ENCODE measurements at regions of chr2 and their contacts with region 1.

Region 1: GRCh38 chr2:171522052-171522787 is at the start of gene CYBRD1:
- DNase-seq: peak; percentile 71
- H3K4me3 ChIP-seq: peak within 1 kb of the TSS; percentile 76 to 96 (median 89)
- H3K27ac ChIP-seq: peak within 1 kb of the TSS; percentile 52
- H3K4me1 ChIP-seq: peaks cover 13% of the 10 kb centered on the region
- H3K27me3 ChIP-seq: no peaks in the 10 kb centered on the region
- CTCF ChIP-seq: no peak
- POLR2A ChIP-seq: peak; percentile 59
- total RNA-seq, gene CYBRD1: 22.8 and 24.8 TPM in 2 replicates

Region 2: DNA sequence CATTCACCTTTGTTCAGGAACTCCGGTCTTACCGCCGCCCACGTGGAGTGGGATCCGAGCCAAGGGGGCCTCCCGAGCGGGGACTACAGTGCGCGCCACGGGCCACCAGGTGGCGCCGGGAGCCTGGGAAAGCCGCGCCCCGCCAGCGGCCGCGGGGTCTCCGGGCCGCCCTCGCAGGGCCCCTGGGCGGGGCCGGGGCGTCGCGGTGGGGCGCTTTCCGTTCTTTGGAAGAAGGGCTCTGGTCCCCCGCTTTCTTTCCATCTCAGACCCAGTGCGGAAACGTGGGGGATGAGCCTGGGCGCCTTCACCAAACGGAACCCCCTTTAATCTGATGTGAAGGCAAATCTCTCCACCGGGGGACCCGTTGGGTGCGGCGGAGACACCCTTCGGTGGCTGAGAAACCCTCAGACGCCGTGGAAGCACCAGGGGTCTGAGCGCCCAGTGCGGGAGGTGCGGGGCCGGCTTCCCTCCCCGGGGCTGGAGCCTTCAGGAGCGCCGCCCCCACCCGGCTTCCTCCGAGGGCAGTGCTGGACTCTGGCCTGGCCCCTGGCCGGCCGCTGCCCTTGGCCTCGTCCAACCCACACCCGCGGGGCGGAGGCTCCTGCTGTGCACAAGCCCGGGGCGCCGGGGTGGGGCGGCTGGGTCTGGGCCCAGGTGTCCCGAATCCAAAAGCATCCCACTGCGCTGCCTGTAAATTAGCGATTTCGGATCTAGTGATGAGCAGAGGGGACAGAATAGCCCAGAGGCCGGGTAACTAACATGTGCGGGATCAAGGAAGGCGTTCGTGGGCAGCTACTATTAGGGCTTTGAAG is 548.5 kb before region 1 on chr2:
- CTCF ChIA-PET with region 1: no interaction called
- POLR2A ChIA-PET with region 1: no interaction called
- dilution Hi-C with region 1: no loop called
- intact Hi-C with region 1: loop called (anchors 1 kb)
- DNase-seq: peak; percentile 85
- H3K4me3 ChIP-seq: peak overlapping the region; percentile 54 to 74 (median 69)
- H3K27ac ChIP-seq: peak overlapping the region; percentile 79
- H3K4me1 ChIP-seq: peaks cover 8% of the 10 kb centered on the region
- H3K27me3 ChIP-seq: no peaks in the 10 kb centered on the region
- CTCF ChIP-seq: peak; percentile 83 to 98
- POLR2A ChIP-seq: peak; percentile 67

Region 3: GRCh38 chr2:171185941-171186340 is 336.3 kb before region 1 on chr2:
- CTCF ChIA-PET with region 1: no interaction called
- POLR2A ChIA-PET with region 1: no interaction called
- dilution Hi-C with region 1: no loop called
- intact Hi-C with region 1: no loop called
- DNase-seq: no peak
- H3K4me3 ChIP-seq: no peak overlapping the region
- H3K27ac ChIP-seq: no peak overlapping the region
- H3K4me1 ChIP-seq: no peaks in the 10 kb centered on the region
- H3K27me3 ChIP-seq: no peaks in the 10 kb centered on the region
- CTCF ChIP-seq: no peak
- POLR2A ChIP-seq: no peak

Region 4: GRCh38 chr2:171433763-171434670 is 88.2 kb before region 1 on chr2 and contains the starts of genes DCAF17 and METTL8:
- CTCF ChIA-PET with region 1: no interaction called
- POLR2A ChIA-PET with region 1: no interaction called
- dilution Hi-C with region 1: no loop called
- intact Hi-C with region 1: loop called (anchors 1 kb)
- DNase-seq: peak; percentile 97
- H3K4me3 ChIP-seq: peak within 1 kb of the TSS; percentile 76 to 87 (median 85)
- H3K27ac ChIP-seq: peak within 1 kb of the TSS; percentile 95
- H3K4me1 ChIP-seq: peaks cover 14% of the 10 kb centered on the region
- H3K27me3 ChIP-seq: no peaks in the 10 kb centered on the region
- CTCF ChIP-seq: peak; percentile 7 to 35
- POLR2A ChIP-seq: peak; percentile 84
- total RNA-seq, gene DCAF17: 14.9 and 15.0 TPM in 2 replicates
- total RNA-seq, gene METTL8: 20.2 and 25.0 TPM in 2 replicates

Region 5: DNA sequence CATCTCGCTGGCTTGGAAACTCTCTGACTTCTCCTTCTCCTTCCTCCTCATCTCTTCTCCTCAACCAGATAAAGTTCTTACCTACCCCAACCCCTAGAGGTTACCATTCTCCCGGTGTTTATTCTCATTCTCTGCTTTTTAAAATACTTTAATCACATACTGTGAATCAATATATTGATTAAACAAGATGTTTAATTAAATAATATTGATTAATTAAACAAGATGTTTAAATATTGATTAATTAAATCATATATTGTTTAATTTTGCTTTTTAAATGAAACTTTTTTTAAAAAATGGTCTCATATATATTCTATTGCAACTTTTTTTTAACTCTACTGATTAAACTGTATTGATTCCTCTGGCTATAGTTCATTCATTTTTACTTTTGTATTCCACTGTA is 21.2 kb after region 1 on chr2:
- CTCF ChIA-PET with region 1: interaction called, 3 read pairs
- POLR2A ChIA-PET with region 1: no interaction called
- dilution Hi-C with region 1: no loop called
- intact Hi-C with region 1: loop called (anchors 1 kb)
- DNase-seq: no peak
- H3K4me3 ChIP-seq: no peak overlapping the region
- H3K27ac ChIP-seq: no peak overlapping the region
- H3K4me1 ChIP-seq: peaks cover 5% of the 10 kb centered on the region
- H3K27me3 ChIP-seq: no peaks in the 10 kb centered on the region
- CTCF ChIP-seq: no peak
- POLR2A ChIP-seq: no peak